Esophagus muscularis mucosa (tissue), 4 donors: ENCODE measurements at regions of chr20 and their contacts with region 1.

Region 1: GRCh38 chr20:8389381-8390036 is 257.4 kb downstream of the PLCB1 start:
- DNase-seq: no peak
- H3K4me3 ChIP-seq: no peak overlapping the region
- H3K27ac ChIP-seq: peak overlapping the region in 1 of 4 donors; percentile 39
- H3K4me1 ChIP-seq: peaks cover 9 to 43% (median 38%) of the 10 kb centered on the region in 4 donors
- H3K27me3 ChIP-seq: no peaks in the 10 kb centered on the region
- CTCF ChIP-seq: peak; percentile 52 to 54 (median 53)
- EP300 ChIP-seq: no peak
- POLR2A ChIP-seq: no peak

Region 2: DNA sequence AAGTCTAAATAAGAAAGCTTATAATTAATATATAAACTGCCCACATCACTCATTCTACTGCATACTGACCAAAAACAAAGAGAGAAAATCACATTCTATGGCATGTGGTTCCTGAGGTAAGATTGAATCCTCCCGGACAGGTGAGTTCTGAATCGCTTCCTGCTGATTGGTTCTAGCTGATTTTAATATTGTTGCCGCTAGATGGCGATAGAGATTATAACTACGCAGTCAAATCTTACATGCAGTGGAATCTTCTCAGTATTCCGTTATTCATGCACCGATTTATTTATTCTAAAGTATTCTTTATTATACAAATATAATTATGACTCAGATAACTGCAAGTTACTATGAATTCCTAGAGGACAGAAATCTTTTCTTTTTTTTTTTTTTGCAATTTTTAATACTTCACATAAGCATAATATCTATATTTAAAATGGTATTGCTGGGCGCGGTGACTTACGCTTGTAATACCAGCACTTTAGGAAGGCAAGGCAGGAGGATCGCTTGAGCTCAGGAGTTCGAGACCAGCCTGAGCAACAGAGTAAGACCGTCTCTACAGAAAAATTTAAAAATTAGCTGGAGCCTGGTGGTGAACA is 345.7 kb before region 1 on chr20:
- intact Hi-C with region 1: loop called (anchors 2 kb)
- DNase-seq: no peak
- H3K4me3 ChIP-seq: peak overlapping the region in 1 of 4 donors; percentile 21
- H3K27ac ChIP-seq: no peak overlapping the region
- H3K4me1 ChIP-seq: peaks cover 0 to 10% (median 0%) of the 10 kb centered on the region in 4 donors
- H3K27me3 ChIP-seq: no peaks in the 10 kb centered on the region
- CTCF ChIP-seq: peak; percentile 71 to 75 (median 73)
- EP300 ChIP-seq: no peak
- POLR2A ChIP-seq: no peak

Region 3: GRCh38 chr20:8305449-8305978 is 84.0 kb before region 1 on chr20:
- intact Hi-C with region 1: loop called (anchors 10 kb)
- DNase-seq: no peak
- H3K4me3 ChIP-seq: no peak overlapping the region
- H3K27ac ChIP-seq: peak overlapping the region in 2 of 4 donors; percentile 1 to 29
- H3K4me1 ChIP-seq: peaks cover 0 to 87% (median 73%) of the 10 kb centered on the region in 4 donors
- H3K27me3 ChIP-seq: no peaks in the 10 kb centered on the region
- CTCF ChIP-seq: peak; percentile 24 to 63 (median 46)
- EP300 ChIP-seq: no peak
- POLR2A ChIP-seq: no peak